A549 (cell line): ENCODE measurements at regions of chr17 and their contacts with region 1.

Region 1: DNA sequence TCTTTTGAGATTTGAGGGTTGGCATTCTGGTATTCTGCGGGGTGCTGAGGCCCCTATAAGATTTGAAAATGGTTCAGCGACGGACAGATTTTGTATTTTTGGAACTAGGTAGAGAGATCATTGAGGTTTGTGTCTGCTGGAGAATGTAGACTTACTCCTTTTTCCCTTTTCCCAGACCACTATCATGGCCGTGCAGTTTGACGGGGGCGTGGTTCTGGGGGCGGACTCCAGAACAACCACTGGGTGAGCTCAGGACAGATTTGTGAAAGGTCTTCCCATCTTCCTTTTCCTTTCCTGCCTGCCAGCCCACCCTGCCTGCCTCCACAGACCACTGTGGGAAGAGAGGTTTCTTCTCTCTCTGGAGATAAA is 573 bp downstream of the PSMB6 start:
- DNase-seq: peak; percentile 65 to 92
- ATAC-seq: peak; percentile 87 to 92
- H3K4me3 ChIP-seq: peak overlapping the region; percentile 92
- H3K27ac ChIP-seq: peak overlapping the region; percentile 84 to 89
- H3K4me1 ChIP-seq: peaks cover 7% of the 10 kb centered on the region; the same call in 2 of the 3 replicates
- CTCF ChIP-seq: no peak
- EP300 ChIP-seq: no peak
- POLR2A ChIP-seq: no peak
- RAD21 ChIP-seq: no peak

Region 2: DNA sequence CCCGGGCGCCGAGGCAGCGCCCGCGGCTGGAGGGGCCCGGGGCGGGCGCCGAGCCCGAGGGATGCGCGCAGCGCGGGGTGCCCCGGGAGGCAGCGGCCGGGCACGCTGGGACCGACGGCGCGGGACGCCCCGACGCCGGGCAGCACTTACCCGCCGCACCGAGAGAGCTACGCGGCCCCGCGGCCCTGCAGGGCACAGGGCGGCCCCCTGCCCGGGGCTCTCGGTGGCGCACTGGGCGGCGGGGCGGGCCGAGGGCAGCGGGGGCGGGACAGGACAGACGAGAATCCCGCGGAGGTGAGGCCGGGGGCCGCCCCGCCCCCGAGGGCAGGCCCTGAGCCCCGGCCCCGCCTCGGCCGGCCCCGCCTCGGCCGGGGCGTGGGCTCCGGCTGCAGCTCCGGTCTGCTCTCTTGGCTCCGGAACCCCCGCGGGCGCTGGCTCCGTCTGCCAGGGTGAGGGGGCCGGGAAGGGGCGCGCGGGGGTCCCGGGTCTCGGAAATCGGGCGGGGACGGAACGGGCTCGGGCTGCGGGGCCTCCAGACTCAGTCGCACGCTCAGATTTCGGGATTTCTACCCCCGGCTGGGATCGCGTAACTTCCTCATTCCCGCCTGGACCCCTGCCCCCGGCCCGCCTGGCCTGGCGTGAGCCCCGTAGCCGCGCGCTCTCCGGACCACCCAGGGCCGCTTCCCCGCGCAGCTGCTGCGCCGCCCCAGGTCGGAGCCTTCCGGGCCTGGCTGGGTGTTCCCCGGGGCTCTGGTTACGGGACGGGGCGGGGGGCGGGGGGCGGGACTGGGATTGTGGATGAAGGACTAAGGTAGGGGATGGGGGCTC is 10.5 kb after region 1 on chr17 and contains the start of gene PLD2:
- CTCF ChIA-PET with region 1: interaction called, 38 read pairs
- POLR2A ChIA-PET with region 1: interaction called, 31 read pairs
- DNase-seq: peak; percentile 81 to 98
- ATAC-seq: peak; percentile 97 to 98
- H3K4me3 ChIP-seq: peak within 1 kb of the TSS; percentile 83
- H3K27ac ChIP-seq: peak within 1 kb of the TSS; percentile 86 to 90
- H3K4me1 ChIP-seq: peaks cover 14% of the 10 kb centered on the region
- CTCF ChIP-seq: no peak
- EP300 ChIP-seq: no peak
- POLR2A ChIP-seq: peak; percentile 88
- RAD21 ChIP-seq: no peak
- polyA plus RNA-seq, gene PLD2: 17.0 and 20.2 TPM in 2 replicates